IMR-90 (cell line): ENCODE measurements at regions of chr19 and their contacts with region 1.

Region 1: DNA sequence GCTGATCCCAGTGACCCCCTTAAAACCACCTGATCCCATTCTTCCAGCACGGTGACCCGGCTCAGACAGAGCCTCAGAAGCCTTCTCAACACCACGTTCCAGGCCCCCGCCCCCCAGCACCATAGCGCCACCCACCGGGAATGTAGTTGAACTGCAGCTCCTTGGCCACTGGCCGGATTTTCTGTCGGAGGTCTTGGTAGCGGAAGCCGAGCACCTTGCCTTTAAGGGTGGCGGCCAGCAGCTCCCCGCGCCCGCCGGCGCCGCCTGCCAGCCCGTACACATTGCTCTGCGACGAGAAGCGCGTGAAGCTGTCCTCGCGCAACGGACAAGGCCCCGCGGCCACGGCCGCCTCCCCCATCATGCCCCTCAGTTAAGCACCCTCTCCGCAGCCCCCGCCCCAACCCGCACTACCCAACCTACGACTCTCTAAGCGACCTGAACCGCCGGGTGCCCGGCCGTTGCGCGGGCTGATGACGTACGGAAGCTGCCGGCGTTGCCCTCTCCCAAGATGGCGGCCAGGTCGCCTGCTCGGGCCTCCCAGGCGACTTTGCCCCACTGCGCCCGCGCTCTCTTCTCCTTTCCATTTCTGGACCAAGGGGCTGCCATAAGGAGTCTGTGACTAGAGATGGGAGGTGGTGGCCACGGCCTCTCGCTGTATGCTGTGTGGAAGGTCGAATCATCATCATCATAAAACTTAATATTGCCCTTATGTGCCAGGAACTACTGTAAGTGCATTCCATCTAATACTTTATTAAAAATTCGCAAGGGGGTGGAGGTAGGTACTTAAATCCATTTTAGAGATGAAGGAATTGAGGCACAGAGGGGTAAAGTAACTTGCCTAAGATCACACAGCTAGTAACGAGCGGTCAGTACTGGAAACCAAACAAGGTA is at the start of gene KPTN:
- DNase-seq: peak; percentile 90
- ATAC-seq: peak; percentile 91
- H3K4me3 ChIP-seq: peak within 1 kb of the TSS; percentile 64
- H3K27ac ChIP-seq: peak within 1 kb of the TSS; percentile 97
- H3K4me1 ChIP-seq: peaks cover 2% of the 10 kb centered on the region; the same call in 1 of the 2 replicates
- H3K27me3 ChIP-seq: no peaks in the 10 kb centered on the region
- CTCF ChIP-seq: peak; percentile 96
- POLR2A ChIP-seq: peak; percentile 77
- RAD21 ChIP-seq: peak; percentile 57
- total RNA-seq, gene KPTN: 3.9 and 4.1 TPM in 2 replicates

Region 2: GRCh38 chr19:47406711-47407416 is 77.2 kb before region 1 on chr19:
- CTCF ChIA-PET with region 1: no interaction called
- POLR2A ChIA-PET with region 1: no interaction called
- dilution Hi-C with region 1: no loop called
- in situ Hi-C with region 1: no loop called
- intact Hi-C with region 1: no loop called
- DNase-seq: no peak
- ATAC-seq: peak; percentile 61
- H3K4me3 ChIP-seq: no peak overlapping the region
- H3K27ac ChIP-seq: no peak overlapping the region
- H3K4me1 ChIP-seq: no peaks in the 10 kb centered on the region
- H3K27me3 ChIP-seq: no peaks in the 10 kb centered on the region
- CTCF ChIP-seq: no peak
- POLR2A ChIP-seq: no peak
- RAD21 ChIP-seq: no peak

Region 3: DNA sequence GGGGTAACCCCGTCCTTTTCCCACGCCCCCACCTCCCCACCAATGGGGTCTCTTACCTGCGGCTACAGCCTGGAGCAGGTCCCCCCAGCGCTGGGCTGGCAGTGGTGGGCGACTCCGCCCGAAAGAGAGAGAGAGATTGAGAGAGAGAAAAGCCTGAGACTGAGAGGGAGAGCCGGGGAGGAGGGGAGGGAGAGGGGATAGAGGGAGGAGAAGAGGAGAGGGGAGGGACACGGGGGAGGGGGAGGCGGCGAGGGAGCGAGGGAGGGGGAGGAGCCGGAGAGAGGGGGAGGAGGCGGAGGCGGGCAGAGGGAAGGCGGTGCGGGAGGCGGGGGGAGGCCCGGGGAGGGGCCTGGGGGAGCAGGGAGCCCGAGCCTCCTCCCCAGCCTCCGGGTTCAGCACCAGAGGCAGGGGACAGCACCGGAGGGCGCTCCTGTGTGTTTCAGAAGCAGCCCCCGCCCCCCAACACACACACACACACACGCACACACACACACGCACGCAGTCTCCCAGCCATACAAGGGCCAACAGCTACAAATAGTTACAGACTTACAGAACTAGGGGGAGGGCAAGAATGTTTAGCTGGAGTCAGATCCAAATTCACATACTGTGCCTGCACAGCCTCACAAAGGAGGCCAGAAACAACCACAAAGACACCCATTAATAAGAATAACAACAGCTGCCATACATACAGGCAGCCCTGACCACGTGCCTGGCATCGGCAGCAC is 12.2 kb before region 1 on chr19 and contains the start of gene SLC8A2:
- CTCF ChIA-PET with region 1: interaction called, 12 read pairs
- POLR2A ChIA-PET with region 1: interaction called, 3 read pairs
- dilution Hi-C with region 1: no loop called
- in situ Hi-C with region 1: no loop called
- intact Hi-C with region 1: no loop called
- DNase-seq: peak; percentile 77
- ATAC-seq: peak; percentile 95
- H3K4me3 ChIP-seq: no peak within 1 kb of the TSS
- H3K27ac ChIP-seq: no peak within 1 kb of the TSS
- H3K4me1 ChIP-seq: no peaks in the 10 kb centered on the region
- H3K27me3 ChIP-seq: peaks cover 49% of the 10 kb centered on the region
- CTCF ChIP-seq: no peak
- POLR2A ChIP-seq: no peak
- RAD21 ChIP-seq: no peak
- total RNA-seq, gene SLC8A2: not detected in 2 replicates